ENCODE measurements at regions of chr9 and their contacts with region 1.

Region 1: GRCh38 chr9:113511856-113512761 is 48.6 kb downstream of the RGS3 start:
- DNase-seq: peak; percentile 89
- H3K4me3 Mint-ChIP-seq: peak overlapping the region; percentile 74
- H3K27ac Mint-ChIP-seq: peak overlapping the region; percentile 96
- H3K4me1 Mint-ChIP-seq: peaks cover 64% of the 10 kb centered on the region
- H3K27me3 Mint-ChIP-seq: no peaks in the 10 kb centered on the region

Region 2: GRCh38 chr9:113340017-113340699 is 172.0 kb before region 1 on chr9 and contains the start of gene WDR31:
- intact Hi-C with region 1: loop called (anchors 5 kb)
- DNase-seq: peak; percentile 95
- H3K4me3 Mint-ChIP-seq: peak within 1 kb of the TSS; percentile 81
- H3K27ac Mint-ChIP-seq: peak within 1 kb of the TSS; percentile 78
- H3K4me1 Mint-ChIP-seq: peaks cover 43% of the 10 kb centered on the region
- H3K27me3 Mint-ChIP-seq: no peaks in the 10 kb centered on the region
- total RNA-seq, gene WDR31: 2.2 and 2.7 TPM in 2 replicates

Region 3: DNA sequence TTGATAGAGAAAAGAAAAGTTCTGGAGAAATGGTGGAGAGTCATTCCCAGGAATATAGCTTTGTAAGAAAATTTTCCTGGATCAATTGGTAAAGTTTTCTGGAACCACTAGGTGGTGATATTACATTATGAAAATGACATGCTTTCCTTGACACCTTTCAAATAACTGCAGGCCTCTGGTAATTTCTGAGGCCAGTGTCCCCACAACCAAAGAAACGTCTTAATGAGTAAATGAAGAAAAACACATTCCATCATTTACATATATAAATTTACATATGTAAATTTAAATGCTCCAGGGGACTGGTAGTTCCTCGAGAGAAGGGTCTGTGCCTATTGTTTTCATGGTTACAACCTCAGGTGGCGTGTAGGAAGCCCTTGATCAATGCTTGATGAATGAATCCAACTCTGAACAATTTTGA is 65.8 kb before region 1 on chr9:
- intact Hi-C with region 1: loop called (anchors 2 kb)
- DNase-seq: peak; percentile 70
- H3K4me3 Mint-ChIP-seq: no peak overlapping the region
- H3K27ac Mint-ChIP-seq: no peak overlapping the region
- H3K4me1 Mint-ChIP-seq: peaks cover 2% of the 10 kb centered on the region
- H3K27me3 Mint-ChIP-seq: no peaks in the 10 kb centered on the region

Region 4: GRCh38 chr9:113530022-113530635 is 18.0 kb after region 1 on chr9:
- intact Hi-C with region 1: no loop called
- DNase-seq: no peak
- H3K4me3 Mint-ChIP-seq: no peak overlapping the region
- H3K27ac Mint-ChIP-seq: no peak overlapping the region
- H3K4me1 Mint-ChIP-seq: peaks cover 17% of the 10 kb centered on the region
- H3K27me3 Mint-ChIP-seq: no peaks in the 10 kb centered on the region

Region 5: GRCh38 chr9:113548221-113549041 is 36.3 kb after region 1 on chr9:
- intact Hi-C with region 1: loop called (anchors 1 kb)
- DNase-seq: no peak
- H3K4me3 Mint-ChIP-seq: peak overlapping the region; percentile 62
- H3K27ac Mint-ChIP-seq: peak overlapping the region; percentile 92
- H3K4me1 Mint-ChIP-seq: peaks cover 33% of the 10 kb centered on the region
- H3K27me3 Mint-ChIP-seq: no peaks in the 10 kb centered on the region

Region 6: GRCh38 chr9:113622600-113623400 is 110.7 kb after region 1 on chr9:
- intact Hi-C with region 1: loop called (anchors 1 kb)
- DNase-seq: peak; percentile 78
- H3K4me3 Mint-ChIP-seq: peak overlapping the region; percentile 52
- H3K27ac Mint-ChIP-seq: peak overlapping the region; percentile 96
- H3K4me1 Mint-ChIP-seq: peaks cover 44% of the 10 kb centered on the region
- H3K27me3 Mint-ChIP-seq: no peaks in the 10 kb centered on the region

Region 7: GRCh38 chr9:113669522-113670115 is 157.5 kb after region 1 on chr9:
- intact Hi-C with region 1: no loop called
- DNase-seq: no peak
- H3K4me3 Mint-ChIP-seq: no peak overlapping the region
- H3K27ac Mint-ChIP-seq: no peak overlapping the region
- H3K4me1 Mint-ChIP-seq: no peaks in the 10 kb centered on the region
- H3K27me3 Mint-ChIP-seq: peaks cover 5% of the 10 kb centered on the region

Measured in activated CD4-positive, alpha-beta T cell treated with anti-CD3 and anti-CD28 coated beads, Interleukin-2, amount 10 ng/mL, durations not matched to agents 24 days and 14 days (primary cell).